Left cardiac atrium (tissue), 4 donors: ENCODE measurements at regions of chr9 and their contacts with region 1.

Region 1: DNA sequence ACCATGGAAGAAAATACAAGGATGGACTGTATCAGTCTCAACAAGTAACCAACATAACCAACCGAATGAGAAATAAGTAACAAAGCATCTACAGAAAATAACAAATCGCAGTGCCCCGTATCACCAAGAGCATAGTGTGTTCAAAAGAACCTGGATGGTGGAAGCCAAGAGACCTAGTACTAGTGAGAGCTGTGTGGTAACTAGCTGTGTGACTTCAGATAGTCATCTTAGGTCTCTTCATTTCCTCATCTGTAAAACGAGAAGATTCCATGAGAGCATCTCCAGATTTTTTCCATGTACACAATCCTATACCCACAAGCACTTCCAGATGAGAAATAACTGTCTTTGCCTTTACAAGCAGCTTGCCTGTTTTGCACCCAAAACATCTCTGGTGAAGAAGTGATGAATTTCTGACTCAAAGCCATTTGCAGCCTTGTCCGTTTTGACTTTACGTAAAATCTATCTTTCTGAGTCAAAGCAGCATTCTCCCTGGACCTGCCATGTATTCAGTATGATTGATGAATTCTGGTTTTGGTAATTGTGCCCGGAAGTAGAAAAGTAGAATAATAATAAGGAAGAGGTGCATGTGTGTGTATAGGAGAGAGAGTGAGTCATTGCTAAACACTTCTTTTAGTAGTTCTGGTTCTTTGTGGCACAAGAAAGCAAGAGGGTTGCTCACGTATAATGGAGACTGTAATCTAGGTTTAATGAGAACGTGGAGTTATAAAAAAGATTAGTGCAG is 41.0 kb downstream of the AOPEP start:
- DNase-seq: no peak
- ATAC-seq: no peak

Region 2: GRCh38 chr9:94687451-94687850 is 80.1 kb before region 1 on chr9:
- intact Hi-C with region 1: loop called in 1 of 2 experiments (anchors 5 kb)
- DNase-seq: no peak
- ATAC-seq: no peak